ENCODE measurements at regions of chr5 and their contacts with region 1.

Region 1: GRCh38 chr5:154166901-154167791 is 23.4 kb upstream of the GALNT10 start:
- DNase-seq: no peak
- H3K4me3 ChIP-seq: no peak overlapping the region
- H3K27ac ChIP-seq: no peak overlapping the region
- H3K4me1 ChIP-seq: no peaks in the 10 kb centered on the region
- CTCF ChIP-seq: no peak

Region 2: DNA sequence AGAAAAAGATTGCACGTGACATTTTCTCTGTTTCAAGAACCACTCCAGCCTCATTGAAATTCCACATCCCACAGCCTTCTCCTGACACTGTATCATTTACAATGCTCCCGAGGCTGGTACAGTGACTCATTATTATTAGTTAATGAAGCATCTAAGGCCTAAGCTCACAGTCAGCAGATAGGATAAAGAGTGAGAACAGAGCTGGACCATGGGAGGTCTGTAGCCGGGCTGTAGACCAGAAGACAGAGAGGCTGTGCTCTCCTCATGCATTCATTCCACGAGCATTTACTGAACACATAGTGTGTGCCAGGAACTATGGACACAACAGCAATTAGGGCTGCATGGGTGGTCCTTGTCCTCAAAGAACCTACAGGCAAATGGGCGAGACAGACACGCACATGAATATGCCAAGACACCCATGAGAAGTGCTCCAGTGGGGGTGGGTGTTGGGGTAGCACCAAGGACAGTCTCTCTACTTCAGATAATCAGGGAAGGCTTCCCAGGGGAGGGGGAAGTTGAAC is 23.9 kb before region 1 on chr5:
- CTCF ChIA-PET with region 1: no interaction called
- POLR2A ChIA-PET with region 1: interaction called, 12 read pairs
- intact Hi-C with region 1: no loop called
- DNase-seq: no peak
- H3K4me3 ChIP-seq: no peak overlapping the region
- H3K27ac ChIP-seq: no peak overlapping the region
- H3K4me1 ChIP-seq: no peaks in the 10 kb centered on the region
- CTCF ChIP-seq: no peak